ENCODE measurements at regions of chr22 and their contacts with region 1.

Region 1: DNA sequence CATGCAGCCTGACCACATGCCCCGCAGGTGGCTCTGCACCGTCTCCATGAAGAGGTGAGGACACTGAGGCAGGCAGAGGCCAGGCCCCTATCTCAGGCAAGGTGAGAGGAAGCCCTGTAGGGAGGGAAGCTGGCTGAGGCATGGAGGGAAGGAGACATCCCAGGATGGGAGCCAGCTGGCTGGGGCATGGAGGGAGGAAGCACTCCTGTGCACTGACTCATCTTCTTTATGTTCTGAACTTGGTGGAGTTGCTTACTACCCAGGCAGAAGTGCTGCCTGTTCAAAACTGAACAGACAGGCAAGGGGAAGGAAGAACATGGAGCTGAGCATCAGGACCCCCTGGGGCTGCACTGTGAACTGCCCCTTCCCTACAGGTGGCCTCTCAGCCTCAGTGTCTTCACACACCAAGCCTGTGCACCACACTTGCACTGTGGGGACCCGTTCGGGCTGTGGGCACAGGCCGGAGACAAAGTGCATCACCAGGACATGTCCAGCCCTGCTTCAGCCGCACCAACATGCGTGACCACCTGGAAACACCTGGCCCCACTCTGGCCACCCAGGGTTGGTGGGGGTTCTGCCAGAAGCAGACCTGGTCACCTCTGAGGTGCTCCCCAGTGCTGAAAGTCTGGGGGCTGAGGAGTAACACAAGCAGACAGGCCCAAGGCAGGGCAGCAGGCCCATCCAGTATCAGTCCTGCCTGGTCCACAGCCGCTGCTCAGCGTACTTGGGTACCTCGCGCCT is 55.5 kb downstream of the DGCR2 start:
- DNase-seq: peak; percentile 42 to 73
- ATAC-seq: peak; percentile 95 to 96
- H3K4me3 ChIP-seq: no peak overlapping the region
- H3K27ac ChIP-seq: peak overlapping the region in 3 of 4 donors; percentile 50 to 64 (median 62)
- H3K4me1 ChIP-seq: peaks cover 10% of the 10 kb centered on the region in 2 donors
- H3K27me3 ChIP-seq: no peaks in the 10 kb centered on the region
- CTCF ChIP-seq: no peak
- POLR2A ChIP-seq: no peak

Region 2: GRCh38 chr22:19002690-19003050 is 64.0 kb before region 1 on chr22:
- in situ Hi-C with region 1: no loop called
- intact Hi-C with region 1: loop called (anchors 10 kb)
- DNase-seq: no peak
- ATAC-seq: no peak
- H3K4me3 ChIP-seq: no peak overlapping the region
- H3K27ac ChIP-seq: no peak overlapping the region
- H3K4me1 ChIP-seq: no peaks in the 10 kb centered on the region
- H3K27me3 ChIP-seq: peaks cover 0 to 12% (median 10%) of the 10 kb centered on the region in 3 donors
- CTCF ChIP-seq: no peak
- POLR2A ChIP-seq: no peak

Region 3: GRCh38 chr22:19016081-19016766 is 50.5 kb before region 1 on chr22:
- in situ Hi-C with region 1: no loop called
- intact Hi-C with region 1: no loop called
- DNase-seq: no peak
- ATAC-seq: peak; percentile 33 to 41
- H3K4me3 ChIP-seq: no peak overlapping the region
- H3K27ac ChIP-seq: no peak overlapping the region
- H3K4me1 ChIP-seq: no peaks in the 10 kb centered on the region
- H3K27me3 ChIP-seq: peaks cover 0 to 10% (median 4%) of the 10 kb centered on the region in 3 donors
- CTCF ChIP-seq: no peak
- POLR2A ChIP-seq: no peak